ENCODE measurements at regions of chr15 and their contacts with region 1.

Region 1: DNA sequence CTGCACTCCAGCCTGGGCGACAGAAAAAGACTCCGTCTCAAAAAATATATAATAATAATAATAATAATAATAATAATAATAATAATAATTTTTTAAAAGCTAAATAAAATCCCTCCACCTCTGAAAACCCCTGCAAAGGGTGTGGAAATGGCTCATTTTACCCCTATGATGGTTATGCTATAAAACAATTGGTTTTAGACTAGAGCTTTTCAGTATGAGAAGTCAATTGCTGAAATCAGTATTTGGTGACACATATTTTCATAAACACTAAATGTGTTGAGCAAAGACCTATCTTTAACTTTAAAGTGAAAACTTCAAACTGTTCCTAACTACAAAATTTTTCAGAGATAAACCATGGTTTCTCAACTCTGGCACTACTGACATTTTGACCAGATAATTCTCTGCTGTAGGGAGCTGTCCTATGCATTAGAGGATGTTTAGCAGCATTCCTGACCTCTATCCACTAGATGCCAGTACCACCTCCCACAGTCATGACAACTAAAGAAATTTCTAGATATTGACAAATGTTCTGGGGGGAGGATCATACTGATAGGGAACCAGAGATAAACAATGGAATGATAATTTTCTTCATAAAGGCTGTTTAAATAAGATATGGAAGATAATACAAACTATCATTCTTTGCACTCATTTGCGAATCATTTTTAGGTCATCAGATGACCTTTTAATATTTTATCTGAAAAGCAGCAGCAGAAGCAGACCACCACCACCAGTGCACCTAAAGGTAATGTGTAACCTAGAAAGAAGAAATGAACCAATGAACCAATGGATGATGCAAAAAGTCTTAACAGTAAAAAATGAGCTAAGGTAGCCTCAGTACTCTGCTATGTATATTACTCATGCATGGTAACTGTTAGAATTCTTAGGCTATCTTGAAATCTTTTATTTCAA is 13.8 kb downstream of the PTPN9 start:
- DNase-seq: no peak
- H3K4me3 ChIP-seq: no peak overlapping the region
- H3K27ac ChIP-seq: no peak overlapping the region
- H3K4me1 ChIP-seq: no peaks in the 10 kb centered on the region
- H3K27me3 ChIP-seq: no peaks in the 10 kb centered on the region
- CTCF ChIP-seq: no peak

Region 2: DNA sequence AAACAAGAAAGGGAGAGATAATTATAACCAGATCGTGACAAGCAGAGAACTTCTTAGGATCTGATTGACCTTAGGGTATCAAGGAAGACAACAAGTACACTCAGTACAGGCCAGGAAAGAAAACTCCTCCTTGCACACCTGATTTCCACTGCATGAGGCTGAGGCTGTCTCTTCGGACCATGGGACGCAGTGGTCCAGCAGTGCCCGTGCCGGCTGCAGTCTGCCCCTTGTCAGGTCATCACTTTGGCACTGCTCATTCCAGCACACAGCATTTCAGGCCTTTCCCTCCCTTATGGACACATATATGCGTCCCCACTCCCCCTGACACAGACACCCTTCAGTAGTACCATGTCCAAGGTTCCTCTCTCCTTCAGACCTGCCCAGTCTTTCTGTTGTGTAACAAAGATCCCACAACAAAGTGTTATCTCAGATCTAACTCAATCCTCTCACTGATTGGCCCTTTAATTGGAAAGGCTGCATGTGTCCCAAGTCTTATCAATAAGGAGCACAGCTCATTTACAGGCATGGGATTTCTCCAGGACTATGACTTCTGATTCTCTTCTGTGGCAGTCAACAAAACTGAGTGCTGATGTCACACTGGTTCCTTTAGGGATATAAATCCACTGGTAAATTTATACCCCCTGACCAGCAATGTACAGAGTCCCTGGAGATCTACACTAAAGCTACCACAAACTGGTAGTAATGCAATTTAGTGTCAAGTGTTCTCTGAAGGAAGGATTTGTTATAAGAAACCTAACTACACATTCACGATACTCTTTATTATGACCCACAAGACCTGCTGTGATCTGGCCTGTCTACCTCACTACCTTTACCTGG is 921.7 kb before region 1 on chr15:
- CTCF ChIA-PET with region 1: interaction called, 11 read pairs
- dilution Hi-C with region 1: no loop called
- in situ Hi-C with region 1: no loop called
- intact Hi-C with region 1: no loop called
- DNase-seq: no peak
- H3K4me3 ChIP-seq: no peak overlapping the region
- H3K27ac ChIP-seq: no peak overlapping the region
- H3K4me1 ChIP-seq: peaks cover 4% of the 10 kb centered on the region
- H3K27me3 ChIP-seq: no peaks in the 10 kb centered on the region
- CTCF ChIP-seq: no peak

Region 3: DNA sequence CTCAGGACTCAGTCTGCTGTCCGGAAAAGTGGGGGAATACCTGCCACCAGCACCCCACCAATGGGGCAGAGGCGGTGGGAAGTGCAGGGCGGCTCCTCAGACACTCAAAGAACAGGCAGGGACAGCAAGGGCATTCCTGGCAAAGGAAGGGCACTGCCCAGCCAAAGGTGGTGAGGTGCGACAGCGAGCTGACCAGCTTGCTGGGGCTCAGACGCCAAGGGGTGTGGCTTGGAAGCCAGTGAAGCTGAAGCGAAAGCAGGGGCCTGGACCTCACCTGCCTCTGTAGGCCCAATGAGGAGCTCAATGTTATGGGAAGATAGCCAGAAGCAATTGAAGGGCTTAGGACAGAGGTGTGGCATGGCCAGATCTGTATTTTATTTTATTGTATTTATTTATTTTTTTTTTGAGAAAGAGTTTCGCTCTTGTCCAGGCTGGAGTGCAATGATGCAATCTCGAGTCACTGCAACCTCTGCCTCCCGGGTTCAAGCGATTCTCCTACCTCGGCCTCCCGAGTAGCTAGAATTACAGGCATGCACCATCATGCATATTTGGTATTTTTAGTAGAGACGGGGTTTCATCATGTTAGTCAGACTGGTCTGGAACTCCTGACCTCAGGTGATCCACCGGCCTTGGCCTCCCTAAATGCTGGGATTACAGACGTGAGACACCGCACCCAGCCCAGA is 757.1 kb before region 1 on chr15:
- CTCF ChIA-PET with region 1: no interaction called
- dilution Hi-C with region 1: no loop called
- in situ Hi-C with region 1: no loop called
- intact Hi-C with region 1: no loop called
- DNase-seq: peak; percentile 70
- H3K4me3 ChIP-seq: no peak overlapping the region
- H3K27ac ChIP-seq: no peak overlapping the region
- H3K4me1 ChIP-seq: peaks cover 9% of the 10 kb centered on the region
- H3K27me3 ChIP-seq: no peaks in the 10 kb centered on the region
- CTCF ChIP-seq: no peak